Caco-2 (cell line): ENCODE measurements at regions of chr20 and their contacts with region 1.

Region 1: GRCh38 chr20:22523499-22524392 is 60.6 kb downstream of the FOXA2 start:
- DNase-seq: peak; percentile 90 to 92
- H3K4me3 ChIP-seq: peak overlapping the region; percentile 26
- H3K4me3 Mint-ChIP-seq: peak overlapping the region; percentile 82
- H3K27ac Mint-ChIP-seq: peak overlapping the region; percentile 99
- H3K4me1 ChIP-seq: peaks cover 41% of the 10 kb centered on the region
- H3K4me1 Mint-ChIP-seq: peaks cover 40% of the 10 kb centered on the region
- H3K27me3 ChIP-seq: no peaks in the 10 kb centered on the region
- H3K27me3 Mint-ChIP-seq: no peaks in the 10 kb centered on the region
- CTCF ChIP-seq: no peak

Region 2: GRCh38 chr20:22511943-22512910 is 11.5 kb before region 1 on chr20:
- CTCF ChIA-PET with region 1: interaction called, 27 read pairs
- POLR2A ChIA-PET with region 1: interaction called, 62 read pairs
- intact Hi-C with region 1: loop called (anchors 1 kb)
- DNase-seq: peak; percentile 92 to 96
- H3K4me3 ChIP-seq: no peak overlapping the region
- H3K4me3 Mint-ChIP-seq: peak overlapping the region; percentile 35
- H3K27ac Mint-ChIP-seq: peak overlapping the region; percentile 50
- H3K4me1 ChIP-seq: peaks cover 71% of the 10 kb centered on the region
- H3K4me1 Mint-ChIP-seq: peaks cover 65% of the 10 kb centered on the region
- H3K27me3 ChIP-seq: no peaks in the 10 kb centered on the region
- H3K27me3 Mint-ChIP-seq: no peaks in the 10 kb centered on the region
- CTCF ChIP-seq: no peak

Region 3: GRCh38 chr20:22578221-22579118 is 54.7 kb after region 1 on chr20:
- CTCF ChIA-PET with region 1: interaction called, 4 read pairs
- POLR2A ChIA-PET with region 1: interaction called, 14 read pairs
- intact Hi-C with region 1: no loop called
- DNase-seq: peak in 1 of 2 experiments; percentile 38
- H3K4me3 ChIP-seq: peak overlapping the region; percentile 23; the same call in 1 of the 2 replicates
- H3K4me3 Mint-ChIP-seq: peak overlapping the region; percentile 78
- H3K27ac Mint-ChIP-seq: peak overlapping the region; percentile 90
- H3K4me1 ChIP-seq: peaks cover 30% of the 10 kb centered on the region
- H3K4me1 Mint-ChIP-seq: peaks cover 33% of the 10 kb centered on the region
- H3K27me3 ChIP-seq: no peaks in the 10 kb centered on the region
- H3K27me3 Mint-ChIP-seq: no peaks in the 10 kb centered on the region
- CTCF ChIP-seq: no peak